Panc1 (cell line): ENCODE measurements at regions of chr4 and their contacts with region 1.

Region 1: GRCh38 chr4:108783665-108784463 is 21.0 kb upstream of the ETNPPL start:
- DNase-seq: no peak
- ATAC-seq: no peak
- H3K4me3 ChIP-seq: no peak overlapping the region
- H3K27ac ChIP-seq: no peak overlapping the region
- H3K4me1 ChIP-seq: no peaks in the 10 kb centered on the region
- H3K27me3 ChIP-seq: no peaks in the 10 kb centered on the region
- CTCF ChIP-seq: no peak; the same call in 1 of the 2 replicates

Region 2: DNA sequence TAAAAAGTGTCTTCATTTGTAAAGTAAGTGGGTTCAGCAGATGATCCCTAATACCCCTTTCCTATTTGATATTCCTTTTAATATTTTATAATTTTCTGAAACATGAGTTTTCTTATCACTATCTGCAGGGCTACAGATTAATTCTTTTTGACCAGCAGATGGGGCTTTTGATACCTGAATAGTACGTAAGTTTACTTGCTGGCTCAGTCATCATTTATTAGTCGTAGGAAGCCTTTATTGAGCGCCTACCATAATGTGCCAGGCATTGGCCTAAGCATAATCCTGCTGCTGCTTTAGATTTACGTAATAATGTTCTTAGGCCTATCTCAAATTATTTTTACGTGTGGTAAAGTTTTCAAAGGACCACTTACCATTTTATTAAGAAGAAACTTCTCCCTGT is 100.4 kb before region 1 on chr4:
- CTCF ChIA-PET with region 1: interaction called, 3 read pairs
- POLR2A ChIA-PET with region 1: no interaction called
- in situ Hi-C with region 1: no loop called
- intact Hi-C with region 1: loop called (anchors 5 kb)
- DNase-seq: peak; percentile 8
- ATAC-seq: peak; percentile 74; the same call in 1 of the 2 replicates
- H3K4me3 ChIP-seq: no peak overlapping the region
- H3K27ac ChIP-seq: no peak overlapping the region
- H3K4me1 ChIP-seq: no peaks in the 10 kb centered on the region
- H3K27me3 ChIP-seq: no peaks in the 10 kb centered on the region
- CTCF ChIP-seq: peak; percentile 45; the same call in 1 of the 2 replicates

Region 3: DNA sequence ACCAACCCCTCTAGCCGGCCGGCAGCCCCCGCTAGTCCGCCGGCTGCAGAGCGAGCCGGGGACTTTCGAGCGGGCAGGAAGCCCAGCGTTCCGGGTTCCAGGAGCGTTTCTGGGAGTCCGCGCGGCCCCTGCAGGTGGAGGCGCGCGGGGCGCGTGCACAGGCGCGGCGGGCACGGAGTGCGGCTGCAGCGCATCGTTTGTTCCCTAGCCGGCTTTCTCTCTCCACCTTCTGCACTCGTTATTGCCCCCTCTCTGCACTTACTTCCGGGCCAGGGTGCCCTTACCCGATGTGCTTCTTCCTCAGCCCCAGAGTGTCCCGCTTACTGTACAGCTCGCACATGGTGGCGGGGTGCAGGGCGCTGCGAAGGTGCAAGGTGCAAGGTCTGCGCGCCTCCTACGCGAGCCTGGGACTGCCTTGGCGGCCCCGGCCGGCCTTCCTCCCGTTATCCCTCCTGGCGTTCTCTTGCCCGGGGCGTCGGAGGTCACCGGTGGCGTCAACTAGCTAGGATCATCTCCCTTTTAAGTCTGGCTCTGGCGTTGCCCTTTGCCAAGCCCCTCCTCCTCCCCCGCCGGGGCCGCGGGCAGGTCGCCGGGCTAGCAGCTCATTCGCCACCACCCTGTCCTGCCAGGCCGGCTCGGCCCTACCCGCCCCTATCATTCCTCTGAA is 21.2 kb before region 1 on chr4 and contains the start of gene ETNPPL:
- CTCF ChIA-PET with region 1: no interaction called
- POLR2A ChIA-PET with region 1: no interaction called
- in situ Hi-C with region 1: no loop called
- intact Hi-C with region 1: no loop called
- DNase-seq: no peak
- ATAC-seq: peak; percentile 92
- H3K4me3 ChIP-seq: peak within 1 kb of the TSS; percentile 34 to 51
- H3K27ac ChIP-seq: no peak within 1 kb of the TSS
- H3K4me1 ChIP-seq: no peaks in the 10 kb centered on the region
- H3K27me3 ChIP-seq: peaks cover 15% of the 10 kb centered on the region
- CTCF ChIP-seq: no peak
- total RNA-seq, gene ETNPPL: not detected